GM10248 (cell line): ENCODE measurements at regions of chr6 and their contacts with region 1.

Region 1: GRCh38 chr6:53718597-53719460 is 53.3 kb upstream of the KLHL31 start:
- DNase-seq: peak; percentile 77
- CTCF ChIP-seq: peak; percentile 86

Region 2: GRCh38 chr6:53673162-53673683 is 45.6 kb before region 1 on chr6:
- CTCF ChIA-PET with region 1: no interaction called
- POLR2A ChIA-PET with region 1: no interaction called
- DNase-seq: no peak
- CTCF ChIP-seq: no peak

Region 3: GRCh38 chr6:53701333-53702218 is 17.3 kb before region 1 on chr6:
- CTCF ChIA-PET with region 1: interaction called, 43 read pairs
- POLR2A ChIA-PET with region 1: no interaction called
- DNase-seq: no peak
- CTCF ChIP-seq: no peak

Region 4: GRCh38 chr6:53707108-53707897 is 11.5 kb before region 1 on chr6:
- CTCF ChIA-PET with region 1: interaction called, 100 read pairs
- POLR2A ChIA-PET with region 1: no interaction called
- DNase-seq: no peak
- CTCF ChIP-seq: no peak

Region 5: GRCh38 chr6:53734473-53735299 is 15.9 kb after region 1 on chr6:
- CTCF ChIA-PET with region 1: interaction called, 100 read pairs
- POLR2A ChIA-PET with region 1: no interaction called
- DNase-seq: peak; percentile 15
- CTCF ChIP-seq: peak; percentile 40

Region 6: DNA sequence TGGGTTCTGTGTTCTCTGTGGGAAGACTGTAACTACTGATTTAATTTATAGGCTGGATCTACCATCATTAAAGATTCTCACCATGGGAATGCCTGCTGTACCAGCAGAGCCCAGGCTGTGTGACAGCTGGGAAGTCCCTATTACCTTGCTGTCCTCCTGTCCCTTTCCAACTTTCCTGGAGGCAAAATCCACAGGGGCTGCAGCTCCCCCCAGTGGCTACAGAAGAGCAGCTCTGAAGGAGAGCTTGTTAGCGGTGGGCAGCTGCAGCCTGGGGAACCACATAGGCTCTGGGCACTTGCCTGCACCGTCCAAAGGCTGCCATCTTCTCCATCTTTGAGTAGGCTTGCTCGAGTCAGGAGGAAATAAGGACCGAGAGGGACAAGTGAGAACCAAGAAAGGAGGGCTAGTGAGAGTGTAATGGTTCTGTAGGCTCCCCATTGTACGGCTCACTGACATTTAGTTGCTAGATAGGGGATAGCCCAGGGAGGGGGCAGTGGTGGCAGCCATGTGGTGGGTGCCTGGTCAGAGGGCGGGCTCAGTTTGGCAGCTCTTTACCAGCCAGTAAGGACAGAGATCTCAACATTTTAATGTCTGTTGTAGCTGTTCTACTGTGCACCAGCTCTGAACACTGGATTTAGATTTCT is 237.4 kb after region 1 on chr6:
- CTCF ChIA-PET with region 1: interaction called, 16 read pairs
- POLR2A ChIA-PET with region 1: no interaction called
- DNase-seq: peak; percentile 55
- CTCF ChIP-seq: peak; percentile 52